ENCODE measurements at regions of chr15 and their contacts with region 1.

Region 1: GRCh38 chr15:60478566-60479360 is at the start of gene ICE2:
- DNase-seq: peak; percentile 89 to 96 (median 94)
- ATAC-seq: peak; percentile 97
- H3K4me3 ChIP-seq: peak within 1 kb of the TSS; percentile 83
- H3K4me3 Mint-ChIP-seq: peak within 1 kb of the TSS; percentile 93 to 100 (median 98)
- H3K27ac ChIP-seq: peak within 1 kb of the TSS; percentile 93
- H3K27ac Mint-ChIP-seq: peak within 1 kb of the TSS; percentile 98 to 100 (median 99)
- H3K4me1 ChIP-seq: peaks cover 23 to 25% of the 10 kb centered on the region in 2 donors
- H3K4me1 Mint-ChIP-seq: peaks cover 43 to 86% (median 70%) of the 10 kb centered on the region in 7 donors
- H3K27me3 ChIP-seq: no peaks in the 10 kb centered on the region
- H3K27me3 Mint-ChIP-seq: no peaks in the 10 kb centered on the region
- total RNA-seq, gene ICE2: 44.8 to 70.9 (median 68.0) TPM

Region 2: GRCh38 chr15:58933281-58934113 is 1545.3 kb before region 1 on chr15 and contains the start of gene SLTM:
- CTCF ChIA-PET with region 1: no interaction called
- POLR2A ChIA-PET with region 1: no interaction called
- intact Hi-C with region 1: loop called in 1 of 2 experiments (anchors 1 kb)
- DNase-seq: peak; percentile 90 to 95 (median 93)
- ATAC-seq: peak; percentile 95
- H3K4me3 ChIP-seq: peak within 1 kb of the TSS; percentile 91
- H3K4me3 Mint-ChIP-seq: peak within 1 kb of the TSS; percentile 91 to 100 (median 98)
- H3K27ac ChIP-seq: peak within 1 kb of the TSS; percentile 93
- H3K27ac Mint-ChIP-seq: peak within 1 kb of the TSS; percentile 98 to 100 (median 99)
- H3K4me1 ChIP-seq: peaks cover 19 to 21% of the 10 kb centered on the region in 2 donors
- H3K4me1 Mint-ChIP-seq: peaks cover 14 to 34% (median 27%) of the 10 kb centered on the region in 7 donors
- H3K27me3 ChIP-seq: no peaks in the 10 kb centered on the region
- H3K27me3 Mint-ChIP-seq: no peaks in the 10 kb centered on the region
- total RNA-seq, gene SLTM: 118 to 166 (median 159) TPM

Region 3: GRCh38 chr15:59656897-59657634 is 821.7 kb before region 1 on chr15 and contains the start of gene GTF2A2:
- CTCF ChIA-PET with region 1: no interaction called
- POLR2A ChIA-PET with region 1: no interaction called
- intact Hi-C with region 1: loop called in 1 of 2 experiments (anchors 1 kb)
- DNase-seq: peak; percentile 81 to 95 (median 89)
- ATAC-seq: peak; percentile 99
- H3K4me3 ChIP-seq: peak within 1 kb of the TSS; percentile 77
- H3K4me3 Mint-ChIP-seq: peak within 1 kb of the TSS in 7 of 10 donors; percentile 18 to 52 (median 26)
- H3K27ac ChIP-seq: peak within 1 kb of the TSS; percentile 89
- H3K27ac Mint-ChIP-seq: peak within 1 kb of the TSS in 4 of 9 donors; percentile 76 to 88 (median 78)
- H3K4me1 ChIP-seq: peaks cover 18% of the 10 kb centered on the region in 2 donors
- H3K4me1 Mint-ChIP-seq: peaks cover 4 to 17% (median 11%) of the 10 kb centered on the region in 7 donors
- H3K27me3 ChIP-seq: no peaks in the 10 kb centered on the region
- H3K27me3 Mint-ChIP-seq: no peaks in the 10 kb centered on the region
- total RNA-seq, gene GTF2A2: 46.6 to 124 (median 50.1) TPM

Region 4: GRCh38 chr15:60389261-60390077 is 89.3 kb before region 1 on chr15:
- CTCF ChIA-PET with region 1: no interaction called
- POLR2A ChIA-PET with region 1: interaction called, 3 read pairs
- intact Hi-C with region 1: loop called in 1 of 2 experiments (anchors 1 kb)
- DNase-seq: peak in 8 of 9 donors; percentile 7 to 58 (median 34)
- ATAC-seq: peak; percentile 88
- H3K4me3 ChIP-seq: peak overlapping the region; percentile 15
- H3K4me3 Mint-ChIP-seq: peak overlapping the region; percentile 17 to 72 (median 66)
- H3K27ac ChIP-seq: no peak overlapping the region
- H3K27ac Mint-ChIP-seq: peak overlapping the region in 4 of 9 donors; percentile 4 to 74 (median 10)
- H3K4me1 ChIP-seq: peaks cover 3 to 32% of the 10 kb centered on the region in 2 donors
- H3K4me1 Mint-ChIP-seq: peaks cover 7 to 68% (median 20%) of the 10 kb centered on the region in 7 donors
- H3K27me3 ChIP-seq: no peaks in the 10 kb centered on the region
- H3K27me3 Mint-ChIP-seq: no peaks in the 10 kb centered on the region

Region 5: DNA sequence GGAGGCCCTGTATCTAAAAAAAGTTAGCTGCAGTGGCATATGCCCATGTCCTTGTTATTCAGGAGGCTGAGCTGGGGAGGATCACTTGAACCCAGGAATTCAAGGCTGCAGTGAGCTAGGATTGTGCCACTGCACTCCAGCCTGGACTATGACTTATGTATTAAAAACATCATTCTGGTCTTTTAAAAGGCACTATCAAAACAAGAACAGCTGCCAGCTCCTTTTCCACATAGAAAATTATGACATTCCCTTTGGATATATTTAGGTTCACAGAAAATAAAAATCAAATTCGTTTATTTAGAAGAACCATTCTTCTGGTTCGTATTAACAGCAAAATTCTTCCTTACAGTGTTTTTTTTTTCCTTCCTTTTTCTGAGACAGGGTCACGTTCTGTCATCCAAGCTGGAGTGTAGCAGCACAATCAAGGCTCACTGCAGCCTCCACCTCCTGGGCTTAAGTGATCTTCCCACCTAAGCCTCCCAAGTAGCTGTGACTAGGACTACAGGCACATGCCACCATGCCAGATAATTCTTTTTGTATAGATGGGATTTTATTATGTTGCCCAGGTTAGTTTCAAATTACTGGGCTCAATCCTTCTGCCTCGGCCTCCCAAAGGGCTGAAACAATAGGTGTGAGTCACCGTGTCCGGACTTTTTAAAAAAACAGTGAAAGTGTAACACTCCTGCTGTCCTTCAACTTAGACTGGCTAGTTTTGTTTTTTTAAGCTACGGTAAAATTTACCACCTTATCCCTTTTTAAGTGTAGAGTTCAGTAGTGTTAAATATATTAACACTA is 13.7 kb before region 1 on chr15:
- CTCF ChIA-PET with region 1: no interaction called
- POLR2A ChIA-PET with region 1: interaction called, 6 read pairs
- intact Hi-C with region 1: loop called in 1 of 2 experiments (anchors 2 kb)
- DNase-seq: no peak
- ATAC-seq: no peak
- H3K4me3 ChIP-seq: no peak overlapping the region
- H3K4me3 Mint-ChIP-seq: no peak overlapping the region
- H3K27ac ChIP-seq: no peak overlapping the region
- H3K27ac Mint-ChIP-seq: no peak overlapping the region
- H3K4me1 ChIP-seq: peaks cover 0 to 4% of the 10 kb centered on the region in 2 donors
- H3K4me1 Mint-ChIP-seq: peaks cover 4 to 12% (median 8%) of the 10 kb centered on the region in 7 donors
- H3K27me3 ChIP-seq: no peaks in the 10 kb centered on the region
- H3K27me3 Mint-ChIP-seq: no peaks in the 10 kb centered on the region

Region 6: GRCh38 chr15:60520825-60521368 is 42.1 kb after region 1 on chr15:
- CTCF ChIA-PET with region 1: interaction called, 5 read pairs
- POLR2A ChIA-PET with region 1: interaction called, 3 read pairs
- intact Hi-C with region 1: loop called in 1 of 2 experiments (anchors 2 kb)
- DNase-seq: peak; percentile 50 to 75 (median 67)
- ATAC-seq: peak; percentile 94
- H3K4me3 ChIP-seq: no peak overlapping the region
- H3K4me3 Mint-ChIP-seq: peak overlapping the region in 2 of 10 donors; percentile 1 to 25
- H3K27ac ChIP-seq: no peak overlapping the region
- H3K27ac Mint-ChIP-seq: peak overlapping the region; percentile 1 to 85 (median 59)
- H3K4me1 ChIP-seq: peaks cover 7 to 13% of the 10 kb centered on the region in 2 donors
- H3K4me1 Mint-ChIP-seq: peaks cover 36 to 64% (median 63%) of the 10 kb centered on the region in 7 donors
- H3K27me3 ChIP-seq: no peaks in the 10 kb centered on the region
- H3K27me3 Mint-ChIP-seq: no peaks in the 10 kb centered on the region

Region 7: DNA sequence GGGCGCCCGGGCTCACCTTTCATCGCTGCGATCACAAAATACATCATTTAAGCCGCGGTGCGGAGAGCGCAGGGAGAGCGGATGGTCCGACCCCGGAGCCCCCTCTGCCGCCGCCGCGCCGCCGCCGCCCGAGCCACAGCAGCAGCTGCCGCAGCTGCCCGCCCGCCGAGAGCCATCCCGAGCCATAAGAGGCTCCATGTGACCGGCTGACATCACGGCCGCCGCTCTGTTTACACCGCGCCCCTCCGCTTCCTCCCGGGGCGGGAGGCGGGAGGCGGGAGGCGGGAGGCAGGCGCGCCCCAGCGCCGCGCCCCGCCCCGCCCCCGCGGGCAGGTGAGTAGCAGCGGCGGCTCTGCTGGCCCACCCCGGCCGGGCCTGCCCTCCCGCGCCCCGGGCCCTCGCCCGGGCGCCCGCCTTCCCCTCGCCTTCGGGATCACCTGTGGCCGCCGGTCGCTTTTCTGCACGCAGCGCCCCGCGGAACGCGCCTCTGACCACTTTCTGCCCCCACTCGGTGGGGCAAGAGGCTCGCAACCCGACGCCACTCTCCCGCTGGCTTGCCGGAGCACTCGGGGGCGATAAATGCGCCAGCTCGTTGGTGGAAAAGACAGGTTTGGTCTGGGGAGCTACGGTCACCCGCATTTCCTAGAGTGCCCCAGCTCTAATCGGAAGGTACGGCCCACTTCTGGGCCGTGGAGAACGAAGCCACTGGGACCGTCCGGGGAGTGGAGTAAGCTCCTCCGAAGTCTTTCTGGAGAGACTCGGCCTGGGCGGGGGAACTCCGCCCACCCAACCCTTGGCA is 113.8 kb after region 1 on chr15:
- CTCF ChIA-PET with region 1: no interaction called
- POLR2A ChIA-PET with region 1: interaction called, 3 read pairs
- intact Hi-C with region 1: loop called (anchors 1 kb)
- DNase-seq: peak; percentile 72 to 89 (median 86)
- ATAC-seq: peak; percentile 95
- H3K4me3 ChIP-seq: peak overlapping the region; percentile 75
- H3K4me3 Mint-ChIP-seq: peak overlapping the region; percentile 84 to 89 (median 86)
- H3K27ac ChIP-seq: peak overlapping the region; percentile 96
- H3K27ac Mint-ChIP-seq: peak overlapping the region; percentile 83 to 93 (median 85)
- H3K4me1 ChIP-seq: peaks cover 6 to 29% of the 10 kb centered on the region in 2 donors
- H3K4me1 Mint-ChIP-seq: peaks cover 19 to 53% (median 48%) of the 10 kb centered on the region in 7 donors
- H3K27me3 ChIP-seq: no peaks in the 10 kb centered on the region
- H3K27me3 Mint-ChIP-seq: peaks cover 0 to 4% (median 0%) of the 10 kb centered on the region in 5 donors